Colonic mucosa (tissue), 4 donors: ENCODE measurements at regions of chrX and their contacts with region 1.

Region 1: GRCh38 chrX:118807151-118808017 is 16.2 kb upstream of the ZCCHC12 start:
- DNase-seq: peak; percentile 30
- H3K4me3 ChIP-seq: no peak overlapping the region
- H3K27ac ChIP-seq: no peak overlapping the region
- H3K4me1 ChIP-seq: no peaks in the 10 kb centered on the region
- H3K27me3 ChIP-seq: no peaks in the 10 kb centered on the region
- CTCF ChIP-seq: peak; percentile 59

Region 2: GRCh38 chrX:118637997-118638396 is 169.4 kb before region 1 on chrX:
- intact Hi-C with region 1: loop called (anchors 5 kb)
- DNase-seq: no peak
- H3K4me3 ChIP-seq: no peak overlapping the region
- H3K27ac ChIP-seq: no peak overlapping the region
- H3K4me1 ChIP-seq: no peaks in the 10 kb centered on the region
- H3K27me3 ChIP-seq: no peaks in the 10 kb centered on the region
- CTCF ChIP-seq: no peak